Gastrocnemius medialis (tissue), 4 donors: ENCODE measurements at regions of chr5 and their contacts with region 1.

Region 1: DNA sequence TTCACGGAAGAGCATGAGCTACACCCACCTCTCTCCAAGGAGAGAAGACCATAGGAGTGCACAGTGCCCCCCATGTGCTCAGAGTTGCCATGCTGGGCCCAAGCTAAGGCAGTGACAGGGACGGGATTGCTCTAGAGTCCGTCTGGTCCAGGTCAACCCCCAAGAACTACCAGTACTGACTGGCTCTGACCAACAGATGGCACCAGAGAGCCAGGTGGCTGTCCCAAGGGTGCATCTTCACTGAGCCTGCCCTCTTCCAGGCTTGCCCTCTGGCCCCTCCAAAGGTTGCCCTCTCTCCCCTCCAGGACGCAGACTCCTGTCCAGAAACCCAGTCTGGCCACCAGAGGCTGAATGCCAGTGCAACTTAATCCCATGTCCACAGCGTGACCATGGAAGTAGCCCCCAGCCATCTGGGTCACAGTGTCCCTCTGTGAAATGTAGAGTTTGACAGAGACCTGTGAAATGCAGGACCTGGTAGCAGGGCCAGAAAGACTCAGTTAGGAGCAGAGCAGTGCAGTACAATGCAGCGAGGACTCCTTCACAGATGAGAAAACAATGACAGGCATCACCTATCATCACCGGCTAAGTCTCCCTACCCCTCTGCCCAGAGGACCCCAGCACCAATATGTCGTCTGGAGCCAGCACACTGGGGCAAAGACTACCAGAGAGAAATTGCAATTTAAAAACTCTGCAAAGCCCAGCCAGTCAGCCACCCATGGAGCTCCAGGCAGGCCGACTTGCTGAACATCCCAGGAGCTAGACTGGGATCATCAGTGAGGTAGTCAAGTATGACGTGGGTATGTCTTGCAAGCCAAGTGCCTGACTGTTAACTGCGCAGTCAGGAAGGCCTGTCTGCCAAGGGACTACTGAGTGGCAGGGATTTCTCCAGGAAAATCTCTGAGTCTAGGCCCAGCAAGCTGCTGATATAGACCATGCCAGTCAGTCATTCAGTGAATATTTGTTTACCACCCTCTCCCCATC is 7.7 kb upstream of the SKP1 start:
- DNase-seq: peak; percentile 47 to 68
- ATAC-seq: peak; percentile 83 to 84
- H3K4me3 ChIP-seq: no peak overlapping the region
- H3K27ac ChIP-seq: no peak overlapping the region
- H3K4me1 ChIP-seq: no peaks in the 10 kb centered on the region
- H3K27me3 ChIP-seq: no peaks in the 10 kb centered on the region
- CTCF ChIP-seq: peak; percentile 91 to 96 (median 93)
- POLR2A ChIP-seq: no peak

Region 2: DNA sequence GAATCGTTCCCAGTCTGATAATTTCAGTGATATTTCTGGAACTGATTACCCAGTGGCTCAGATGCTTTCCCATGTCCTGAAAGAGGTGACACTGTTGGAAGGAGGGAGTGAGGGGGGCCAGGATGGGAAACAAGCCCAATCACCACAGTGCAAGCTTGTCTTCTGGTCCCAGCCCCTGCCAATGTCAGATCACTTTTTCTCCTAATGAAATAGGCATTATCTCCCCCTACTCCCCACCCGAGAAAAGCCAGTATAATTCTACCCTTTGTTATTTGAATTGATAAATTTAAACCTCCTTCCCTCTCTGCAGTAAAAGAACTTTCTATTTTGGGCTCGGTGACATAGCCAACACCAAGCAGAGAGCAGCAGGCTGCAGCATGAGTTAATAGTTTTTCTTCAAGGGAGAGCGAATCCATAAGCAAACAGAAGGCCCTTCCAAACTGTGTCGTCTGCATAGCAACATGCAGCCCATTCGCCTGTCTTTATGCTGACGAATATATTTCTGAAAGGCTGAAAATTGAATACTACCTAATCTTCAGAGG is 56.0 kb after region 1 on chr5:
- in situ Hi-C with region 1: no loop called
- intact Hi-C with region 1: loop called (anchors 5 kb)
- DNase-seq: no peak
- ATAC-seq: peak; percentile 21 to 34
- H3K4me3 ChIP-seq: peak overlapping the region in 1 of 4 donors; percentile 3
- H3K27ac ChIP-seq: peak overlapping the region; percentile 79 to 82 (median 81)
- H3K4me1 ChIP-seq: peaks cover 43 to 47% of the 10 kb centered on the region in 2 donors
- H3K27me3 ChIP-seq: no peaks in the 10 kb centered on the region
- CTCF ChIP-seq: no peak
- POLR2A ChIP-seq: no peak

Region 3: GRCh38 chr5:134281081-134281480 is 96.6 kb after region 1 on chr5:
- in situ Hi-C with region 1: loop called (anchors 5 kb)
- intact Hi-C with region 1: no loop called
- DNase-seq: no peak
- ATAC-seq: no peak
- H3K4me3 ChIP-seq: no peak overlapping the region
- H3K27ac ChIP-seq: no peak overlapping the region
- H3K4me1 ChIP-seq: no peaks in the 10 kb centered on the region
- H3K27me3 ChIP-seq: no peaks in the 10 kb centered on the region
- CTCF ChIP-seq: no peak
- POLR2A ChIP-seq: no peak